Common myeloid progenitor, CD34-positive (primary cell): ENCODE measurements at regions of chr20 and their contacts with region 1.

Region 1: DNA sequence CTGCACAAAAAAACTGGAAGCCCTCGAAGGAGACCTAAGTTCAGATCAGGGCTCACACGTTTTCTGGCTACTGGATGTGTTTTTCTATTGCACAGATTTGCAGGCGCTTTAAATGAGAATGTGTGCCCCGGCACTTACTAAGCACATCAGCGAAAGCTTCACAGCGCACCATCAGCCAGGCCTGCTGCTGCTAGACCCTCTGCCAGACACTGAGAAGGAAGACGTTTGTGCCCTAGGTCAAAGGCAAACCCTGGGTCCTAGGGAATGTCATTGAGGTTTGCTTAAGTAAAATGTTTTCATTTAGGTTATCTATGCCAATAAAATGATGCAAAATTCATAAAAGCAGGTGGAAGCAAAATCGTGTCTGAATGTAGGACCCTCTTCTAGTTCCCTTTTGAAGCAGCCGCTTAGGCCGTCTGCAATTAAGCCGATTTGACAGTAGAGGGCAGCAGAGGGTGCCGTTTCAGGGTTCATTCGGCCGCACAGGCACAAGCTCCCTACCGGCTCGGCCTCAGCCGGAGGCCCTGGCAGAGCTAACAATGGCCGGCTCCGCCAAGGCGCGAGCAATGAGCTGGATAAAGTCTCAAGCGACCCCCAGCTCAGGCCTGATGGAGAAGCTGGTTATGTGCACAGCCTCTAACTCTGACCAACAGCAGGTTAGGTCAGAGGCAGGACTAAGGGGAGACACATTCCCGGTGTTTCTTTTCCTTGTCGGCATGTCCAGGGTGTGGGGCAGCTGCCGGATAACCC is 107.2 kb upstream of the FOXA2 start:
- DNase-seq: peak; percentile 73 to 84 (median 80)
- H3K4me3 ChIP-seq: no peak overlapping the region
- H3K27ac ChIP-seq: no peak overlapping the region
- H3K4me1 ChIP-seq: peaks cover 0 to 4% (median 0%) of the 10 kb centered on the region in 4 experiments
- H3K27me3 ChIP-seq: no peaks in the 10 kb centered on the region

Region 2: GRCh38 chr20:22339091-22339881 is 352.3 kb before region 1 on chr20:
- CTCF ChIA-PET with region 1: interaction called, 98 read pairs
- POLR2A ChIA-PET with region 1: no interaction called
- DNase-seq: peak; percentile 77 to 85 (median 79)
- H3K4me3 ChIP-seq: peak overlapping the region in 2 of 7 experiments; percentile 17 to 25
- H3K27ac ChIP-seq: no peak overlapping the region
- H3K4me1 ChIP-seq: peaks cover 0 to 10% (median 8%) of the 10 kb centered on the region in 4 experiments
- H3K27me3 ChIP-seq: peaks cover 0 to 2% (median 0%) of the 10 kb centered on the region in 5 experiments

Region 3: DNA sequence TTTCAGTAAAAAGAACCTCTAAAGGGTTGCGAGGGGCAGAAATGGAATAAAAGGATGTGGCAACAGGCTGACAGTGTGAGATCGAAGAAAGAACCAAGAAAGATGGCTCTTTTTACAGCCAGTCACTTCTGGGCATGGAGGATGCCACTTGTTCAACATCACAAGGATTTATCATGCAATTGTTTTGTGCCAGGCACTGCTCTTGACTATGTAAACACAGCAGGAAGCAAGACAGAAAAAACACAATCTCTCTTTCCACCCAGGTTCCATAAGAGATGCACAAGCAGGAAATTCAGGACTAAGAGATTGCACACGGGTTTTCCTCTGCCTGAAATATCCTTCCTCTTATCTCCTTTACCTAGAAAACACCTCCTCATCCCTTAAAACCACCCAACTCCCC is 145.2 kb before region 1 on chr20:
- CTCF ChIA-PET with region 1: no interaction called
- POLR2A ChIA-PET with region 1: no interaction called
- DNase-seq: no peak
- H3K4me3 ChIP-seq: no peak overlapping the region
- H3K27ac ChIP-seq: no peak overlapping the region
- H3K4me1 ChIP-seq: peaks cover 0 to 4% (median 0%) of the 10 kb centered on the region in 4 experiments
- H3K27me3 ChIP-seq: peaks cover 4 to 44% (median 8%) of the 10 kb centered on the region in 5 experiments

Region 4: GRCh38 chr20:22716821-22717351 is 25.3 kb after region 1 on chr20:
- CTCF ChIA-PET with region 1: interaction called, 36 read pairs
- POLR2A ChIA-PET with region 1: interaction called, 3 read pairs
- DNase-seq: peak; percentile 77 to 97 (median 96)
- H3K4me3 ChIP-seq: peak overlapping the region in 1 of 7 experiments; percentile 23
- H3K27ac ChIP-seq: no peak overlapping the region
- H3K4me1 ChIP-seq: peaks cover 12 to 44% (median 29%) of the 10 kb centered on the region in 4 experiments
- H3K27me3 ChIP-seq: no peaks in the 10 kb centered on the region

Region 5: GRCh38 chr20:22974353-22974752 is 282.8 kb after region 1 on chr20:
- CTCF ChIA-PET with region 1: interaction called, 43 read pairs
- POLR2A ChIA-PET with region 1: no interaction called
- DNase-seq: peak; percentile 29 to 59 (median 51)
- H3K4me3 ChIP-seq: no peak overlapping the region
- H3K27ac ChIP-seq: no peak overlapping the region
- H3K4me1 ChIP-seq: peaks cover 0 to 3% (median 0%) of the 10 kb centered on the region in 4 experiments
- H3K27me3 ChIP-seq: no peaks in the 10 kb centered on the region

Region 6: GRCh38 chr20:23200918-23201317 is 509.4 kb after region 1 on chr20:
- CTCF ChIA-PET with region 1: interaction called, 15 read pairs
- POLR2A ChIA-PET with region 1: no interaction called
- DNase-seq: peak; percentile 37 to 60 (median 56)
- H3K4me3 ChIP-seq: no peak overlapping the region
- H3K27ac ChIP-seq: no peak overlapping the region
- H3K4me1 ChIP-seq: no peaks in the 10 kb centered on the region
- H3K27me3 ChIP-seq: peaks cover 0 to 6% (median 0%) of the 10 kb centered on the region in 5 experiments

Region 7: GRCh38 chr20:23340524-23340923 is 649.0 kb after region 1 on chr20:
- CTCF ChIA-PET with region 1: interaction called, 99 read pairs
- POLR2A ChIA-PET with region 1: no interaction called
- DNase-seq: peak; percentile 67 to 80 (median 78)
- H3K4me3 ChIP-seq: no peak overlapping the region
- H3K27ac ChIP-seq: no peak overlapping the region
- H3K4me1 ChIP-seq: peaks cover 0 to 8% (median 0%) of the 10 kb centered on the region in 4 experiments
- H3K27me3 ChIP-seq: no peaks in the 10 kb centered on the region